ENCODE measurements at regions of chr2 and their contacts with region 1.

Region 1: GRCh38 chr2:207926133-207926988 is 99.0 kb downstream of the PLEKHM3 start:
- DNase-seq: peak; percentile 90
- H3K4me3 ChIP-seq: peak overlapping the region in 2 of 4 donors; percentile 3 to 15
- H3K27ac ChIP-seq: peak overlapping the region; percentile 65 to 85 (median 77)
- H3K4me1 ChIP-seq: peaks cover 0 to 58% (median 49%) of the 10 kb centered on the region in 4 donors
- H3K27me3 ChIP-seq: no peaks in the 10 kb centered on the region
- CTCF ChIP-seq: peak in 1 of 4 experiments; percentile 24
- EP300 ChIP-seq: peak; percentile 2 to 91 (median 61)
- POLR2A ChIP-seq: no peak

Region 2: DNA sequence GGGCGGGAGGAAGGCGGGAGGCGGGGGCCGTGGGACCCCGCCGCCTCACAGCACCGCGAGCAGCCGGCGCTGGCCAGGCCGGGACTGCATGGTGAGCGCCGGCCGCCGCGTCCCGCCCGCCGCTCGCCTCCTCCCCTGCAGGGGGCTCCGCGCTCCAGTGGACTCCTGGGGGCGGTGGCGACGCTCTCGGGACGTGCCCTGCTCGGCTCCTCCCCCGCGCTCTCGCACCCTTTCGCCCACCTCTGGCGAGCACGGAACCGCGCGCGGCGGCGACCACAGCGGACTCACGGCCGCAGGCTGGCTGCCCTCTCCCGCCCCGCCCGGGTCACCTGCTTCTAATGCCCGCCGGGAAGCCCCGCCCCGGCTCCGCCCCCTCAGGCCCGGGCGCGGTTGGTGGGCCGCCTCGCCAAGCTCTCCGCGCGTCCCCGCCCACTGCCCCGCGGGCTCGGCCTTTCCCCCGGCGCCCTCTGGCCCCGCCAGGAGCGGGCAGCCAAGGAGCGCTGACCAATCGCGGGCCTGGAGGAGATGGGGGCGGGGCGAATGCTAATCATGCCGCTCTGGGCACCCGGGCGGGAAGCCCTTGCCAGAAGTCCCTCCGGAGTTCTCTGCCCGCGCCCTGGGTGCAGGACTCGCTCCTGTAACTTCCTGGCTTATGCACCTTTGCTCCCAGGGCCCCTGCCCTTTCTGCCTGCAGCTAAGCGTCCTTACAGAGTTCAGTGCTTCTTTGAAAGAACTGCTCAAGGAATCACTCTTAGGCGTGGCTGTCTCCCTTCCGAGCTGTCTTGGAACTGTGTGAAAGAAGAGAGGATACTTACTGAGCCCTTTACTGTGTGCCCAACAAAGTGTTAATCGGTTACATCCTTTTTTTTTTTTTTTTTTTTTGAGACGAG is 156.5 kb before region 1 on chr2 and contains the start of gene FZD5:
- intact Hi-C with region 1: loop called (anchors 2 kb)
- DNase-seq: peak; percentile 97
- H3K4me3 ChIP-seq: peak within 1 kb of the TSS; percentile 75 to 98 (median 86)
- H3K27ac ChIP-seq: peak within 1 kb of the TSS; percentile 81 to 97 (median 92)
- H3K4me1 ChIP-seq: peaks cover 0 to 45% (median 40%) of the 10 kb centered on the region in 4 donors
- H3K27me3 ChIP-seq: no peaks in the 10 kb centered on the region
- CTCF ChIP-seq: peak in 3 of 4 experiments; percentile 22 to 71 (median 28)
- EP300 ChIP-seq: peak in 1 of 4 donors; percentile 35
- POLR2A ChIP-seq: peak in 1 of 2 donors; percentile 70
- total RNA-seq, gene FZD5: 29.3 to 52.0 (median 37.4) TPM

Region 3: GRCh38 chr2:207828361-207829057 is 97.9 kb before region 1 on chr2:
- intact Hi-C with region 1: loop called (anchors 1 kb)
- DNase-seq: no peak
- H3K4me3 ChIP-seq: no peak overlapping the region
- H3K27ac ChIP-seq: peak overlapping the region in 3 of 4 donors; percentile 81 to 89 (median 81)
- H3K4me1 ChIP-seq: peaks cover 3 to 57% (median 56%) of the 10 kb centered on the region in 4 donors
- H3K27me3 ChIP-seq: no peaks in the 10 kb centered on the region
- CTCF ChIP-seq: no peak
- EP300 ChIP-seq: no peak
- POLR2A ChIP-seq: no peak

Region 4: GRCh38 chr2:207967121-207967520 is 40.8 kb after region 1 on chr2:
- intact Hi-C with region 1: loop called (anchors 5 kb)
- DNase-seq: no peak
- H3K4me3 ChIP-seq: no peak overlapping the region
- H3K27ac ChIP-seq: no peak overlapping the region
- H3K4me1 ChIP-seq: peaks cover 0 to 38% (median 23%) of the 10 kb centered on the region in 4 donors
- H3K27me3 ChIP-seq: no peaks in the 10 kb centered on the region
- CTCF ChIP-seq: no peak
- EP300 ChIP-seq: no peak
- POLR2A ChIP-seq: no peak